ENCODE measurements at regions of chr15 and their contacts with region 1.

Region 1: GRCh38 chr15:69058830-69059556 is 44.5 kb downstream of the NOX5 start:
- DNase-seq: peak; percentile 72 to 98 (median 94)

Region 2: GRCh38 chr15:68924866-68925560 is 134.0 kb before region 1 on chr15:
- intact Hi-C with region 1: no loop called
- DNase-seq: peak; percentile 66 to 97 (median 85)

Region 3: DNA sequence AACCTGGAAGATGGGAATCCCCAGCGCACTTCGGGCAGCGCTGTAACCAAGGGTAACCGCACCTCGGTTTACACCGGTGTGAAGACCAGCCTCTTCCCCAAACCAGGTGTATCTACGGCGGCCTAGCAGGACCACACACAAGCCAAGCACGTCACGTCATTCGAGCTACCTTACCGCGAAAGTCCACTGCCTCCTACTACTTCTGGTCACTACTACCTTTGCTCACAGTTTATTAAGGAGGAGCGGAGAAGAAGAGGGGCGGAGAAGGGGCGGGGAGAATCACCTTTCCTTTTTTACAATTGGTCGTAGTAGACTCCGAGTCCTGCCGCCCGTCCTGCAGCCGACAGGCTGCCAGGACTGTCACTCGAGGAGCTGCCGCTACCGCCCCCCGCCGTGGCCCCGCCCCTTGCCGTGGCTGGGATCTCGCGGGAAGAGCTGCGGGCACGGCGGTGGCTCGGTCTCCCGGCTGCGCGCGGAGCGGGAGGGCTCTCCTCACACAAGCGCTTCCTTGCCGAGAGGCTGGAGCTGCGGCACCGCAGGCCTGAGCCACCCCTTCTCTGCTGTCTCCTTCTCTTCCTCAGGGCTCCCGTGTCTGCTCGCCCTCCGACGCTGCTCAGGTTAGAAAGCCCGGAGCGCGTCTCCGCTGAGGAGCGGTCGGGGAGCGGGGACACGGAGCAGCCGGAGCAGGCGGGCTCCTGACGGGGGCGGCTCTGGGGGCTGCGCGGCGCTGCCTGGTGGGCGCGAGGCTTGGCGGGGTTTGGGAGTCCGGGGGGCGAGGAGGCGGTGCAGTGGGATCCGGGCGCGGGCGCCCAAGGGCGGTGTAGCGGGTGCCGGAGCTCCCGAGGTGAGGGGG is 101.4 kb after region 1 on chr15 and contains the start of gene GLCE:
- intact Hi-C with region 1: loop called (anchors 5 kb)
- DNase-seq: peak; percentile 92 to 100 (median 97)

Region 4: GRCh38 chr15:69225355-69226025 is 166.5 kb after region 1 on chr15:
- intact Hi-C with region 1: loop called (anchors 1 kb)
- DNase-seq: no peak

Region 5: DNA sequence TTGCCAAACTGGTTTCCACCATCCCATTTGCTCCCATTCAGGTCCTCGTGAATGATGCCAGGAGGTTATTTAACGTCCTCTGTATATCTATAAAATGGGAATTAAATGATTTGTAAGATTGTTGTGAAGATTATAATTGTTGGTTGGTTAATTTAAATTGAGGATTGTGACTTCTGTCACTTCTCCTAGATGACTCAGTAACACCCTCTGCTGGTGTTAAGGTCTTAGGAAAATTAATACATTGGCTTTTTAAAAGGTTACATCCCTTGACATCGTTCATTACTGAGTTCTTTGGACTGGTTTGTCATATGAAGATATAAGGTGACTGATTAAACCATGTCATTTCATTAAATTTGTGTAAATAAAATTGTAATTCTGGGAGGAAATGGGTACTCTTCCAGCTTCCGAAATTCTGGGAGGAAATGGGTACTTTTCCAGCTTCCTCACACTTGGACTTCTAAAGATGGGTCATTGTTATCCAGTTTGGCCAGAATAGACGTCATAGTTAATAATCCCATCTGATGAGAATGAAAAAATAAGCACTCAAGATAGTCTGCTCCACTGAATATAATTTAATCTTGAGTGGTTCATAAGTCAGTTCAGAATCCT is 206.5 kb after region 1 on chr15:
- intact Hi-C with region 1: loop called (anchors 1 kb)
- DNase-seq: no peak

Region 6: DNA sequence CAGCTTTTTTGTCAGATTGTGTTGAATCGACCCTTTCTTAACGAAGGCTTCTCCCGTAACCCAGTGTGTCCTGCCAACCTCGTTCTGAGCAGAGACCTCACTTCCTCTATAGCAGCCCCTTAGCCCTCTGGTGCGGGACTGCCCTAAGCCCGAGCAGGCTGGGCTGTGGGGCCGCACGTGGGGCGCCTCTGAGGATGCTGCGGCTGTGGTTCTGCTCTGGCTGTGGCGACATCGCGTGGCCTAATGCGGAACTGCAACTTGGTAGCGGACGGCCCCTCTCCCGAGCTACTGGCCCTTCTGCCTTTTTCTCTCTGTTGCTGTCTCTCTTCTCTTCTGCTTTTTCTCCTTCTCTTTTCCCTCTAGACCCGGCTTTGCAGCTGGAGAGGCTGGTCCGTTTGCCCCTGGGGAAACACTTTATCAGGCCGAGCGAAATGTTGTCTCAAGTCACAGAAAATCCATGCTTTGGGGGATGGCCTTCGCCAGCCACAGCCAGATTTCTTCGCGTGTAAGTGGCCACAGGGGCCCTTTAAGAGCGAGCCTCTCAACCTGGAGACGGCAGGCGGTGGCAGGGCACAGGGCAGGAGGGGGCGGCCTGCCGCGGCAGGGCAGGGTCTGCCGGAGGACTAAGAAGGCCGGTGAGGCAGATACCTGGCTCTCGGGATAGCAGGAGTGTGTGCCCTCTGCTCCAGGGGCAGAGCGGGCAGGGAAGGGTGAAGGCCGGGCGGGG is 335.7 kb after region 1 on chr15:
- intact Hi-C with region 1: loop called (anchors 1 kb)
- DNase-seq: peak; percentile 74 to 98 (median 92)